Activated CD4-positive, alpha-beta T cell treated with anti-CD3 and anti-CD28 coated beads for 36 hours (primary cell): ENCODE measurements at regions of chr2 and their contacts with region 1.

Region 1: GRCh38 chr2:202265467-202266277 is at the start of gene NOP58:
- DNase-seq: peak; percentile 95
- ATAC-seq: peak; percentile 84
- H3K4me3 Mint-ChIP-seq: no peak within 1 kb of the TSS
- H3K27ac Mint-ChIP-seq: peak within 1 kb of the TSS; percentile 78
- H3K4me1 Mint-ChIP-seq: peaks cover 15% of the 10 kb centered on the region
- H3K27me3 Mint-ChIP-seq: no peaks in the 10 kb centered on the region
- total RNA-seq, gene NOP58: 160 to 180 TPM

Region 2: GRCh38 chr2:201071479-201072200 is 1194.0 kb before region 1 on chr2 and contains the starts of genes HYCC2 and NDUFB3:
- CTCF ChIA-PET with region 1: no interaction called
- POLR2A ChIA-PET with region 1: no interaction called
- intact Hi-C with region 1: loop called in 1 of 2 experiments (anchors 5 kb)
- DNase-seq: peak; percentile 95
- ATAC-seq: peak; percentile 94
- H3K4me3 Mint-ChIP-seq: peak within 1 kb of the TSS; percentile 97
- H3K27ac Mint-ChIP-seq: peak within 1 kb of the TSS; percentile 96
- H3K4me1 Mint-ChIP-seq: peaks cover 58% of the 10 kb centered on the region
- H3K27me3 Mint-ChIP-seq: no peaks in the 10 kb centered on the region
- total RNA-seq, gene HYCC2: 15.8 to 16.0 TPM
- total RNA-seq, gene NDUFB3: 126 to 150 TPM

Region 3: GRCh38 chr2:202033321-202034248 is 232.1 kb before region 1 on chr2 and contains the start of gene FZD7:
- CTCF ChIA-PET with region 1: no interaction called
- POLR2A ChIA-PET with region 1: no interaction called
- intact Hi-C with region 1: loop called in 1 of 2 experiments (anchors 1 kb)
- DNase-seq: peak; percentile 91
- ATAC-seq: peak; percentile 83
- H3K4me3 Mint-ChIP-seq: peak within 1 kb of the TSS; percentile 72
- H3K27ac Mint-ChIP-seq: peak within 1 kb of the TSS; percentile 22
- H3K4me1 Mint-ChIP-seq: peaks cover 13% of the 10 kb centered on the region
- H3K27me3 Mint-ChIP-seq: peaks cover 21% of the 10 kb centered on the region
- total RNA-seq, gene FZD7: 0.58 to 0.94 TPM

Region 4: GRCh38 chr2:202249521-202249850 is 16.2 kb before region 1 on chr2:
- CTCF ChIA-PET with region 1: no interaction called
- POLR2A ChIA-PET with region 1: no interaction called
- intact Hi-C with region 1: no loop called
- DNase-seq: no peak
- ATAC-seq: no peak
- H3K4me3 Mint-ChIP-seq: no peak overlapping the region
- H3K27ac Mint-ChIP-seq: no peak overlapping the region
- H3K4me1 Mint-ChIP-seq: peaks cover 5% of the 10 kb centered on the region
- H3K27me3 Mint-ChIP-seq: no peaks in the 10 kb centered on the region

Region 5: GRCh38 chr2:202299712-202300111 is 34.0 kb after region 1 on chr2:
- CTCF ChIA-PET with region 1: no interaction called
- POLR2A ChIA-PET with region 1: interaction called, 10 read pairs
- intact Hi-C with region 1: no loop called
- DNase-seq: no peak
- ATAC-seq: peak; percentile 83
- H3K4me3 Mint-ChIP-seq: no peak overlapping the region
- H3K27ac Mint-ChIP-seq: peak overlapping the region; percentile 86
- H3K4me1 Mint-ChIP-seq: peaks cover 44% of the 10 kb centered on the region
- H3K27me3 Mint-ChIP-seq: no peaks in the 10 kb centered on the region

Region 6: DNA sequence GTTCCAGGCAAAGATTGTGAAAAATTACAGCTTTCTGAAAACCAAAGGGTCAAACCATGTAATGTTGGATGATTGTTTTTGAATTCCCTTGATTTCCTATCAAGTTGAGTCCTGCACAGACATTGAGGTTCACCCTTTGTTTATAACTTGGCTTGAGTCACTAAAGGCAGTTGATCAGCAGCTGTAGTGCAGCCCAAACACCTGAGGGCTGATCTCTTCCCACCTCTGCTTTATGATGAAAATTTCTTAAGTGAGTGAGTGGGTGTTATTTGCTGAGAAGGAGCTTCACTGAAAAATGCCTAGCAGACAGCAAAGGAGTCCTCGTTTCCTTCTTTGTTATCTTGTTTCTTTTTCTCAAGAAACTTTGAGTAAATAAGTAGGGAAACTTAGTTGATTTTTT is 78.5 kb after region 1 on chr2:
- CTCF ChIA-PET with region 1: no interaction called
- POLR2A ChIA-PET with region 1: no interaction called
- intact Hi-C with region 1: no loop called
- DNase-seq: no peak
- ATAC-seq: no peak
- H3K4me3 Mint-ChIP-seq: no peak overlapping the region
- H3K27ac Mint-ChIP-seq: no peak overlapping the region
- H3K4me1 Mint-ChIP-seq: no peaks in the 10 kb centered on the region
- H3K27me3 Mint-ChIP-seq: no peaks in the 10 kb centered on the region

Region 7: DNA sequence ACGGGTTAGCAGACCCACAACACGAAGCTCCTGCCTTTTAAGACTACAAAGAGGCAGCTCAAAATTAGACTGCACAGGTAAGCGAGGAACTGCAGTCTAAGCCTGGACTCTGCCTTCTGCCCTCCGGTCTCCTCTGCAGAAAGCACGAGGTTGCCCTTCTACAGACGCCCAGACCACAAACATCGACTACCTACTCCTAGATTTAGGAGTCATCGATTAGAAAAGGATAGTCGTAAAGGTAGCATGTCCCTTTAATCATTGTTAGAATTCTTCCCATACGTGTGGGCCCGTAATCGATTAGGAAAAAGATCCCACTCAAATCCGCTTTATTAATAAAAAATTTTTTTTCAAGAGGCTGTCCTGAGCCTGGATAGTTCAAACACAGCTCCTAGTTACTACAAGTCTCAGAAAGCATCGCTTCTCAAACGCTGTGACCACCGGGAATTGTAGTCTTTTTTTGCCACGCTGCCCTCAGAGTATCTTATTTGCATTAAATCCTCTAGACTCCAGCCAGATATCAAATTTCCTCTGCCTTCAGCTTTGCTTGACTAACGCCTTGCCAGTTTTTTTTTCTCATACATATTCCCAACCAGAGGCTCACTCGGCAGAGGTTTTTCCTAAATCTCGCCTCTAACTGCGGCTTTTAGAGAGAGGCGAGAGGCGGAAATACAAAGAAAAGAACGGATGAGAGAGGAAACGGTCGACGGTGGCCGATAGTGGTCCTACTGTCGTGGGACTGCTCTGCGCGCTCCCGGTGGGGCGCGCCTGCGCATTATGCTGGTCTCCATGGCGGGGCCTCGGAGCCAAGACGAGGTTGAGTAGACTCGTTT is 646.1 kb after region 1 on chr2 and contains the starts of genes CARF and WDR12:
- CTCF ChIA-PET with region 1: no interaction called
- POLR2A ChIA-PET with region 1: no interaction called
- intact Hi-C with region 1: loop called in 1 of 2 experiments (anchors 1 kb)
- DNase-seq: peak; percentile 96
- ATAC-seq: peak; percentile 84
- H3K4me3 Mint-ChIP-seq: peak within 1 kb of the TSS; percentile 84
- H3K27ac Mint-ChIP-seq: peak within 1 kb of the TSS; percentile 95
- H3K4me1 Mint-ChIP-seq: peaks cover 30% of the 10 kb centered on the region
- H3K27me3 Mint-ChIP-seq: no peaks in the 10 kb centered on the region
- total RNA-seq, gene CARF: 6.2 to 9.0 TPM
- total RNA-seq, gene WDR12: 92.5 to 129 TPM